BJ (cell line): ENCODE measurements at regions of chr7 and their contacts with region 1.

Region 1: DNA sequence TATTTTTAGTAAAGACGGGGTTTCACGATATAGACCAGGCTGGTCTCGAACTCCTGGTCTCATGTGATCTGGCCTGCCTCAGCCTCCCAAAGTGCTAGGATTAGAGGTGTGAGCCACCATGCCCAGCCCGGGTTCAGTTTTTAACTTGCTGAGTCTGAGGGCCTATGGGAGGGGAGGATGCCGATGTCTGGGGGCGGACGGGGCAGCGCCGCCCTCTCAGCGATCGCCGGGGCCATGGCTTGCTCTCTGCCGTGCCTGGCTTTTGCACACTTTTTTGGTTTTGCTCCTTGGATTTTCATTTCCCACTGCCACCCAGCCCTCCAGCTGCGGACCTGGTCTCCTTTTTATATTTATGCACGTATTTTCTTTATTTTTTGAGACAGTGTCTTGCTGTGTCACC is 15.2 kb upstream of the COL26A1 start:
- DNase-seq: no peak
- H3K4me3 ChIP-seq: no peak overlapping the region
- H3K27me3 ChIP-seq: no peaks in the 10 kb centered on the region
- CTCF ChIP-seq: no peak

Region 2: GRCh38 chr7:101333912-101334311 is 13.6 kb before region 1 on chr7:
- CTCF ChIA-PET with region 1: interaction called, 4 read pairs
- POLR2A ChIA-PET with region 1: interaction called, 10 read pairs
- DNase-seq: no peak
- H3K4me3 ChIP-seq: no peak overlapping the region
- H3K27me3 ChIP-seq: peaks cover 6% of the 10 kb centered on the region
- CTCF ChIP-seq: no peak

Region 3: DNA sequence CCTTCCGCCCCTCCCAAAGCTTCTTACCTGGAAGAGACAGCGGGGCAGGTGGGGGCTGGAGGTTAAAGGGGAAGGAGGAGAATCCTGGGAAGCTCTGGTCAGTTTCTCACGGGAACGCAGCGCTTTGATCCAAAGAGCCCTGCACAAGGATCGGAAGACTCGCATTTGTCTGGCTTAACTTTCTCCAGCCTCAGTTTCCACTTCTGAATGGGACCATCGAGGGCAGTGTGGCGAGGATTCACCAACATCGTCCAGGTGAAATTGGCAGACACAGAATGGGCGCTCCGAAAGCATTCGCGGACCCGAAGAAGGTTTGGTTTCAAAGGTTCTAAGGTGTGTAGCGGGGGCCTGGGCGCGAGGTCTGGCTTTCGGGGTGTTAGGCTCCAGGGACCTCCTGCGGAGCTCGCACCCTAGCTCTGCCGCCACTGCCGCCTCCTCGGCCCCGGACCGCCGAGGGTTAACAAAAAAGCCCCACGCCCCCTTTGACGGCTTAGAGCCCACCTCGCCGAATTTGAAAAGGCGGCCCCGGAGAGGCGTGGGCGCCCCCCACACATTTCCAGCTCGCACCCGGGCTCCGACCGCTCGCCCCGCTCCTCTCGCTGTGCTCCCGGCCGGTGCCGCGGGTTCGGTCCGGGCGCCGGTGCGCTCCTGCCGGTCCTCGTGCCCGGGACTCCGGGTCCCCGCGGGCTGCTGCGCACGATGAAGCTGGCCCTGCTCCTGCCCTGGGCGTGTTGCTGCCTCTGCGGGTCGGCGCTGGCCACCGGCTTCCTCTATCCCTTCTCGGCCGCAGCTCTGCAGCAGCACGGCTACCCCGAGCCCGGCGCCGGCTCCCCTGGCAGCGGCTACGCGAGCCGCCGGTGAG is 15.1 kb after region 1 on chr7 and contains the start of gene COL26A1:
- CTCF ChIA-PET with region 1: no interaction called
- POLR2A ChIA-PET with region 1: no interaction called
- DNase-seq: no peak
- H3K4me3 ChIP-seq: peak within 1 kb of the TSS; percentile 38
- H3K27me3 ChIP-seq: peaks cover 8% of the 10 kb centered on the region
- CTCF ChIP-seq: no peak
- polyA plus RNA-seq, gene COL26A1: 0.29 and 0.48 TPM in 2 replicates

Region 4: GRCh38 chr7:101402088-101402779 is 54.8 kb after region 1 on chr7:
- CTCF ChIA-PET with region 1: no interaction called
- POLR2A ChIA-PET with region 1: no interaction called
- DNase-seq: peak; percentile 66
- H3K4me3 ChIP-seq: no peak overlapping the region
- H3K27me3 ChIP-seq: peaks cover 8% of the 10 kb centered on the region
- CTCF ChIP-seq: no peak

Region 5: GRCh38 chr7:101465576-101466196 is 118.2 kb after region 1 on chr7:
- CTCF ChIA-PET with region 1: no interaction called
- POLR2A ChIA-PET with region 1: no interaction called
- DNase-seq: no peak
- H3K4me3 ChIP-seq: no peak overlapping the region
- H3K27me3 ChIP-seq: peaks cover 2% of the 10 kb centered on the region; the same call in 1 of the 2 replicates
- CTCF ChIP-seq: no peak

Region 6: DNA sequence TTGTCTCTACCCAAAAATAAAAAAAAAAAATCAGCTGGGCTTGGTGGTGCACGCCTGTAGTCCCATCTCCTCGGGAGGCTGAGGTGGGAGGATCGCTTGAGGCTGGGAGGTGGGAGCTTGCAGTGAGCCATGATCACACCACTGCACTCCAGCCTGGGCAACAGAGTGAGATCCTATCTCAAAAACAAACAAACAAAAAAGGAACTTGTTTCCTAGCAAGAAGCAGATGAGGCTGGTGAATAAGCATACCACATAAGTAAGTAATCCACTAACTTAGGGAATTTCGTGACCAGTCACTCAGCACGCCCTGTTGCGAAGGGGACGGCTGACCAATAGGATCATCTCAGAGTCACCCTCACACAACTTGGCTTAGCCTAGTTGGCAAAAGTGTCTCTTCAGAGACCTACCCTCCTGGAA is 534.5 kb after region 1 on chr7:
- CTCF ChIA-PET with region 1: no interaction called
- POLR2A ChIA-PET with region 1: no interaction called
- DNase-seq: peak; percentile 99
- H3K4me3 ChIP-seq: no peak overlapping the region
- H3K27me3 ChIP-seq: no peaks in the 10 kb centered on the region
- CTCF ChIP-seq: no peak